Activated CD4-positive, alpha-beta T cell treated with anti-CD3 and anti-CD28 coated beads, Interleukin-2, amount 10 ng/mL, durations not matched to agents 24 days and 14 days (primary cell): ENCODE measurements at regions of chr17 and their contacts with region 1.

Region 1: DNA sequence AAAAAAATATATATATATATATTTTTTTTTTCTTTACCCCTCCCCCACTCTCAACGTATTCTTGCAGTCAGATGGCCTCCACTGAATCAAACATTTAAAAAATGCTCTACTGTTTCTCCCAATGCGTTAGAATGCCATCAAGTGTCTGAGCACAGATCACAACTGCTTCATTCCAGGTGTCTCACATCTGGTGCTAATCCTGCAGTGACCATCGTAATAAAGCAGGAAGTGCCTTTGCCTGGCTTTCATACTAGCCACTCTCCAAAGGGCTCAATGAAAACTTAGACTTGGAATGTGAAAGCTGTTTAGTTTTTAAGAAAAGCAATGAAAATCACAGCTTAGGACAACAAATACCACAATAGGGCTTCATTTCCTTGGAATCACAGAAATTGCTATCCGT is 37.2 kb downstream of the SKAP1 start:
- DNase-seq: no peak
- H3K4me3 Mint-ChIP-seq: no peak overlapping the region
- H3K27ac Mint-ChIP-seq: no peak overlapping the region
- H3K4me1 Mint-ChIP-seq: peaks cover 23% of the 10 kb centered on the region
- H3K27me3 Mint-ChIP-seq: no peaks in the 10 kb centered on the region

Region 2: DNA sequence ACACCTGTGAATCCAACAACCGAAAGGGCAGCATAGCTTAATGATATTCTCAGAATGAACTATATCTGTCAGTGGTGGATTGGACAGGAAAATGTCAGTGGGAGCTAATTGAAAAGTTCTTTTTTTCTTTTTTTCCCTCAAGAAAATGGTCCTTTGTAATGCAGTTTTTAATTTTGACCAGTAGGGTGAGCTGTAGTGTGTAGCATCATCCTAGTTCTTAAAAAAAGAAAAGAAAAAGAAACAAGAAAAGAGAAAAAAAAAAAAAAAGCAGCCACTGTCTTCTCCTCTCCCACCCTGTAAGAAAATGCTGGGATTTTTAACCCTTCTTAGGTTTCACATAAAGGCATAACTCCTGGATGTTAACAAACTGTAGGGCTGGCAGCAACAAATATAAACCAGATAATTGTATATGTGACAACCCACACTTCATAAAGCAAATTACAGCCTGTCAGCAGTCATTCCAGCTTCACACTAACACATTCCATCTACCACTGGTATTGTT is 41.0 kb before region 1 on chr17:
- intact Hi-C with region 1: loop called (anchors 5 kb)
- DNase-seq: no peak
- H3K4me3 Mint-ChIP-seq: no peak overlapping the region
- H3K27ac Mint-ChIP-seq: no peak overlapping the region
- H3K4me1 Mint-ChIP-seq: peaks cover 6% of the 10 kb centered on the region
- H3K27me3 Mint-ChIP-seq: no peaks in the 10 kb centered on the region